Gastrocnemius medialis (tissue), 4 donors: ENCODE measurements at regions of chr11 and their contacts with region 1.

Region 1: DNA sequence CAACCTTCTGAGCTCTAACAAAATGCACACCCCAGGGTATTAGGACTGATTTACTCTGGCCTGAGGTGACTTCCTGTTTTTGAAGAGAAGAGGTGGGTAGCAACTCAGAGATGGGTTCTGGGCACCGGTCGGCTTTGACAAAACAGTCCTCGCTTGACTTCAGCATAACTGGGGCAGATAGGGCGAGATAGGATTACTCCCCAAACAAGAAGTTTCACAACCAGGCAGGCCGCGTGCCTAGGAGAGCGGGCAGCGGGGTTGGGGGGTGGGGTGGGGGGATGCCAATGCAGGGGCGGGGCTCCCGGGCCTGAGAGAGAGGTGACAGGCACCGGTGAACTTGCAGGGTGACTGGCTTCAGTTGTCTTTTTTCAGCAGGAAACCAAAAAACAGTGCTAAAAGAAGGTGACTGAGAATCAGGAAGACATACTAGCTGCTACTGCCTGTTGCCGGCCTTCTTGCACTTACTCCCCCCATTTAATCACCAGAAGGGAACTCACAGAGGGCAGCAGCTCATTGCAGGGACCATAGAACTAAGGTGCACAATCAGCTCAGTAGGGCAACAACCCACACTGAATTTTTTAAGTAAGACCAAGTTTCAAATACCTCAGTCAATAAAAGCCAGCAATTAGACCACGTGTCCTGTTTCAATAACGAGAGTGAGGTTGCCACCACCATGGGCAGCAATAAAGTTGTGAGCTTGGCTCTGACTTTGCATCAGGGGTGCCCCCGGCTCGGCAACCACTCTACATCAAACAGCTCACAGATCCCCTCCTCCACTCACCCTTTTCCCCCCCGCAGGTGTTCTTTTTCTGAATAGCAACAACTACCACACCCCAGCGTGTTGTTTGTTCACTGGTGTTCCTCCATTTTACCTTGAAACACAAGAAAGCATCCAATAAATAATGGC is 37.2 kb upstream of the ETS1 start:
- DNase-seq: peak; percentile 33 to 56
- ATAC-seq: peak; percentile 61 to 75
- H3K4me3 ChIP-seq: no peak overlapping the region
- H3K27ac ChIP-seq: peak overlapping the region in 2 of 4 donors; percentile 8 to 34
- H3K4me1 ChIP-seq: peaks cover 0 to 5% of the 10 kb centered on the region in 2 donors
- H3K27me3 ChIP-seq: no peaks in the 10 kb centered on the region
- CTCF ChIP-seq: no peak
- POLR2A ChIP-seq: no peak

Region 2: DNA sequence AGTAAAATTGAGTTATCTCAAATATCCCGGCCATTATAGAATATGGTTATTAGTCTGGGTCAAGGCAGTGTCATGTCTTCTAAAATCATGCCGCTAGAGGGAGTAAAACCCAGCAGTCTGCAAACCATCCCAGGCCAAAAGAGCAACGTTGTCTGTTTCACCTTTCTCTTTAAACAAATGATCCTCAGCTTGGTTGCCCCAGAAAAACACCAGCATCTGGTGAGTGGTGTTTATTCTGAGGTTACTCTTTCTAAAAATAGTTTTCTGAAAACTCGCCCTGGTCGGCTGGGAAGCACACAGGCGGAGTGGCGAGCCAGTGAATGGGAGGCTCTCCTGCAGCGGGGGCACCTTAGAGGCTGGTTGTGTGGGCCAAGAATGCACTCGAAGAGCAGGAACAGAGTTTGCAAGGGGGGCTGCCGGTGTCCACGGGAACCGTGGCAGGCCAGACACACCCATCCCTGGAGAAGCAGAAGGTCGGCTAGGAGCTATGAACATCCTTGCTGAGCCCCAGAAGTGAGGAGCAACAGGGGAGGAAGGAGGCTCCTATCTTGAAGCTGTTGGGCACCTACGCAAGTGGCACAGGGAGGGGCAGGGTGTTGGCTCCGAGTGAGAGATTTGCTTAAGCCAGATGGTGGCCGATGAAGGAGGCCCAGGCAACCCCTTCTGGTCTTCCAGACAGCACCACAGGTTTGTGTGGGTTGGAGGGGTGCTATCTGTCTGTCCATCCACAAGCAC is 334.2 kb before region 1 on chr11:
- in situ Hi-C with region 1: loop called in 2 of 4 experiments (anchors 5 kb)
- intact Hi-C with region 1: no loop called
- DNase-seq: peak; percentile 35 to 47
- ATAC-seq: peak; percentile 96 to 97
- H3K4me3 ChIP-seq: peak overlapping the region; percentile 10 to 35 (median 20)
- H3K27ac ChIP-seq: peak overlapping the region; percentile 50 to 59 (median 53)
- H3K4me1 ChIP-seq: peaks cover 9% of the 10 kb centered on the region in 2 donors
- H3K27me3 ChIP-seq: no peaks in the 10 kb centered on the region
- CTCF ChIP-seq: peak; percentile 80 to 88 (median 85)
- POLR2A ChIP-seq: no peak

Region 3: GRCh38 chr11:128482512-128483191 is 141.9 kb before region 1 on chr11:
- in situ Hi-C with region 1: loop called in 1 of 4 experiments (anchors 25 kb)
- intact Hi-C with region 1: loop called (anchors 5 kb)
- DNase-seq: peak; percentile 44 to 68
- ATAC-seq: peak; percentile 59 to 76
- H3K4me3 ChIP-seq: peak overlapping the region; percentile 2 to 21 (median 8)
- H3K27ac ChIP-seq: peak overlapping the region; percentile 57 to 70 (median 68)
- H3K4me1 ChIP-seq: peaks cover 49 to 73% of the 10 kb centered on the region in 2 donors
- H3K27me3 ChIP-seq: no peaks in the 10 kb centered on the region
- CTCF ChIP-seq: no peak
- POLR2A ChIP-seq: no peak

Region 4: GRCh38 chr11:128552783-128553661 is 71.5 kb before region 1 on chr11:
- in situ Hi-C with region 1: no loop called
- intact Hi-C with region 1: loop called (anchors 5 kb)
- DNase-seq: no peak
- ATAC-seq: no peak
- H3K4me3 ChIP-seq: no peak overlapping the region
- H3K27ac ChIP-seq: peak overlapping the region in 3 of 4 donors; percentile 21 to 41 (median 29)
- H3K4me1 ChIP-seq: peaks cover 3 to 5% of the 10 kb centered on the region in 2 donors
- H3K27me3 ChIP-seq: no peaks in the 10 kb centered on the region
- CTCF ChIP-seq: no peak
- POLR2A ChIP-seq: no peak